Caco-2 (cell line): ENCODE measurements at regions of chr3 and their contacts with region 1.

Region 1: DNA sequence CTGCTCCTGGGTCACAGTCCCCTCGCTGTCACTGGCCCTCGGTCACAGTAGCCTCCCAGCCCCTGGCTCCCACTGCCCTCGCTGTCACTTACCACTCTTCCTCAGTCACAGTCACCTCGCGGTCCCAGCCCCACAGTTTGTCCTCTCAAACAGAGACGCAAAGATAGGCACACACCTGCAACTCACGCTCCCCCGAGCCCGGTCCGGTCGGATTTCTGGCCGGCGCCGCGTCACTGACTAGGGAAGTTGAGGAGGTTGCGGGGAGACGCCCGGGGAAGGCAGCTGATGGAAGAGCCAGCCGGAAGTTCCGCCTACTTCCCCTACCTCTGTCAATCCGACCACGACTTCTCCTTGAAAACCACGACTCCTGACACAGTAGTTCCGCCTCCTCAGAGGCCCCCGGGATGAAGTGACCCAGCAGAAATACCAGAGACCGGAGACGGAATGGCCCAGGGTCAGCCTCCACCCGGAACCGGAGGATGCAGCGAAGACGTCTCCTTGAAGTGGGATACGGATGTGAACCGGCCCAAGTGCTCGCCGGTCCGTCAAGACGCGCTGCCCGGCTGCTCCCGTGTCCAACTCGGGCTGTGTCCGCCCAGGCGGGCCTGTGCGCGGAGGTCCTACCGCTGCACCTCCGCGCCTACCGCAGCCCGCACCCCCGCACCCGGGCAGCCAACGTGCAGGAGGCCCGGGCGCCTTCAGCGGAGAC is at the start of gene PCYT1A:
- DNase-seq: peak; percentile 91 to 94
- H3K4me3 ChIP-seq: peak within 1 kb of the TSS; percentile 97
- H3K4me3 Mint-ChIP-seq: peak within 1 kb of the TSS; percentile 98
- H3K27ac Mint-ChIP-seq: peak within 1 kb of the TSS; percentile 99
- H3K4me1 ChIP-seq: peaks cover 21% of the 10 kb centered on the region
- H3K4me1 Mint-ChIP-seq: peaks cover 9% of the 10 kb centered on the region
- H3K27me3 ChIP-seq: no peaks in the 10 kb centered on the region
- H3K27me3 Mint-ChIP-seq: no peaks in the 10 kb centered on the region
- CTCF ChIP-seq: no peak
- total RNA-seq, gene PCYT1A: 52.2 and 54.6 TPM in 2 replicates

Region 2: GRCh38 chr3:196274585-196274984 is 13.0 kb before region 1 on chr3:
- CTCF ChIA-PET with region 1: no interaction called
- POLR2A ChIA-PET with region 1: interaction called, 3 read pairs
- intact Hi-C with region 1: loop called (anchors 1 kb)
- DNase-seq: no peak
- H3K4me3 ChIP-seq: no peak overlapping the region
- H3K4me3 Mint-ChIP-seq: no peak overlapping the region
- H3K27ac Mint-ChIP-seq: no peak overlapping the region
- H3K4me1 ChIP-seq: peaks cover 16% of the 10 kb centered on the region
- H3K4me1 Mint-ChIP-seq: peaks cover 10% of the 10 kb centered on the region
- H3K27me3 ChIP-seq: no peaks in the 10 kb centered on the region
- H3K27me3 Mint-ChIP-seq: no peaks in the 10 kb centered on the region
- CTCF ChIP-seq: no peak

Region 3: GRCh38 chr3:196432137-196432879 is 144.7 kb after region 1 on chr3 and contains the start of gene UBXN7:
- CTCF ChIA-PET with region 1: no interaction called
- POLR2A ChIA-PET with region 1: no interaction called
- intact Hi-C with region 1: loop called (anchors 1 kb)
- DNase-seq: peak; percentile 92 to 95
- H3K4me3 ChIP-seq: peak within 1 kb of the TSS; percentile 88
- H3K4me3 Mint-ChIP-seq: peak within 1 kb of the TSS; percentile 83
- H3K27ac Mint-ChIP-seq: peak within 1 kb of the TSS; percentile 93
- H3K4me1 ChIP-seq: 0 out of 2 replicates have a peak, but pooled peaks cover 6% of the 10 kb centered on the region
- H3K4me1 Mint-ChIP-seq: peaks cover 7% of the 10 kb centered on the region
- H3K27me3 ChIP-seq: no peaks in the 10 kb centered on the region
- H3K27me3 Mint-ChIP-seq: no peaks in the 10 kb centered on the region
- CTCF ChIP-seq: no peak
- total RNA-seq, gene UBXN7: 59.9 and 62.7 TPM in 2 replicates

Region 4: GRCh38 chr3:196440041-196440537 is 152.5 kb after region 1 on chr3:
- CTCF ChIA-PET with region 1: no interaction called
- POLR2A ChIA-PET with region 1: interaction called, 13 read pairs
- intact Hi-C with region 1: no loop called
- DNase-seq: no peak
- H3K4me3 ChIP-seq: no peak overlapping the region
- H3K4me3 Mint-ChIP-seq: no peak overlapping the region
- H3K27ac Mint-ChIP-seq: no peak overlapping the region
- H3K4me1 ChIP-seq: no peaks in the 10 kb centered on the region
- H3K4me1 Mint-ChIP-seq: no peaks in the 10 kb centered on the region
- H3K27me3 ChIP-seq: no peaks in the 10 kb centered on the region
- H3K27me3 Mint-ChIP-seq: no peaks in the 10 kb centered on the region
- CTCF ChIP-seq: no peak

Region 5: DNA sequence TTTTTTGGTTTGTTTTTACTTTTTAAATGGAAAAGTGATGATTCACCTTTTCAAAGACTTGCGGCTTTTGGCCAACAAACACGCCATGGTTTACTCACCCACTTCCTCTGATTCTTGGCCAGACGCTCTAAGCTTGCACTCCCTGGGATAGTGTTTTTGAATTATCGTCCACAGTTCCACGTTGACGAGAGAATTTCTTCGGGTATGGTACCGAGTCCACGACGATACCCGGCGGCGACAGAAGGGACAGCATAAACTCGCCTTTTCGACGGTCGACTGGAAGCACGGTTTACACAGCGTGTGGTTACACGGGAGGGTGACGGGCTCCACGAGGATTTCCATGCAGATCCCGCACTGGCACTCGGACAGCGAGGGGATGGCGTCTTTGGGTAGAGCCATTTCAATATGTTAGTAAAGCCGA is 215.2 kb after region 1 on chr3:
- CTCF ChIA-PET with region 1: no interaction called
- POLR2A ChIA-PET with region 1: no interaction called
- intact Hi-C with region 1: loop called (anchors 1 kb)
- DNase-seq: peak in 1 of 2 experiments; percentile 41
- H3K4me3 ChIP-seq: peak overlapping the region; percentile 92
- H3K4me3 Mint-ChIP-seq: peak overlapping the region; percentile 90
- H3K27ac Mint-ChIP-seq: peak overlapping the region; percentile 83
- H3K4me1 ChIP-seq: peaks cover 8% of the 10 kb centered on the region; the same call in 1 of the 2 replicates
- H3K4me1 Mint-ChIP-seq: peaks cover 6% of the 10 kb centered on the region
- H3K27me3 ChIP-seq: no peaks in the 10 kb centered on the region
- H3K27me3 Mint-ChIP-seq: no peaks in the 10 kb centered on the region
- CTCF ChIP-seq: no peak